Mucosa of descending colon (tissue), 3 donors: ENCODE measurements at regions of chr13 and their contacts with region 1.

Region 1: DNA sequence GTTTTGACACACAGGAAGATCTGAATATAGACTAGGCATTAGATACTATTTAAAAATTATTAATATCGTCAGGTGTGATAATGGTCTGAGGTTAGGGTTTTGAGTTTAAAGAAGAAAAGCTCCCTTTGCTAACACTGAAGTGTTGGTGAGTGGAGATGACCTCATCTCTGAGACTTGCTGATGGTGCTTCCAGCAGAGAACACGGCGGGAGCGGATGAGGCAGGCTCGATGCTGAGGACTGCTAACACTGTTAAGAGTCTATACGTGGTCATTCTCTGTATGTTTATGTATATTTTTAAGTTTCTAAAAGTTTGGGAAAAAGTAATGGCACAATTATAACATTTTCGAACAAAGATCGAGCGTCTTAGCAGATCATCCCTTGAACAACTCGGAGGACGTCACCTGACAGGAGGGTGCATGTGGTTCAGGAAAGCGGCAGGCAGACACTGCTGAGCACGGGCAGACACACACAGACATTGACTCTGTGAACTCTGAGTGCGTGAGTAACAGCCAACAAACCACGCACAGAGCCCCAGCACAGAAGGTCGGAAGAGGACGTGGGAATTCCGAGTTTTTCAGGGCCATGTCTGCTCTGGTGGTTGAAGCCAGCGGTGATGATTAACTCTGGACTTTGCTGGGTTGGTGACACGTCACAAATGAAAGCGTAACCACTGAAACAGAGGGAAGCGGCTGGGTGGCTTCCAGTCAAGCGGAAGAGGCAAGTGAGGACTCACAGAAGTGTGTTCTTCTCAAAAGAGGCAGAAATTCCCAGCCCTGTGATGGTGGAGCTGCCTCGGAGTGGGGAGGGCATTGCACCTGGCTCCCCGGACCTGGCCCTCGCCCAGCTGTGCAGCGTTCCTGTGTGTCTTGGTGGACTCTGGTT is 91.9 kb upstream of the TEX29 start:
- DNase-seq: no peak
- ATAC-seq: no peak
- H3K4me3 ChIP-seq: no peak overlapping the region
- H3K4me1 ChIP-seq: no peaks in the 10 kb centered on the region
- CTCF ChIP-seq: no peak

Region 2: GRCh38 chr13:111076156-111077013 is 152.1 kb before region 1 on chr13:
- intact Hi-C with region 1: loop called in 1 of 2 experiments (anchors 10 kb)
- DNase-seq: no peak
- ATAC-seq: no peak
- H3K4me3 ChIP-seq: no peak overlapping the region
- H3K4me1 ChIP-seq: no peaks in the 10 kb centered on the region
- CTCF ChIP-seq: no peak